ENCODE measurements at regions of chr17 and their contacts with region 1.

Region 1: DNA sequence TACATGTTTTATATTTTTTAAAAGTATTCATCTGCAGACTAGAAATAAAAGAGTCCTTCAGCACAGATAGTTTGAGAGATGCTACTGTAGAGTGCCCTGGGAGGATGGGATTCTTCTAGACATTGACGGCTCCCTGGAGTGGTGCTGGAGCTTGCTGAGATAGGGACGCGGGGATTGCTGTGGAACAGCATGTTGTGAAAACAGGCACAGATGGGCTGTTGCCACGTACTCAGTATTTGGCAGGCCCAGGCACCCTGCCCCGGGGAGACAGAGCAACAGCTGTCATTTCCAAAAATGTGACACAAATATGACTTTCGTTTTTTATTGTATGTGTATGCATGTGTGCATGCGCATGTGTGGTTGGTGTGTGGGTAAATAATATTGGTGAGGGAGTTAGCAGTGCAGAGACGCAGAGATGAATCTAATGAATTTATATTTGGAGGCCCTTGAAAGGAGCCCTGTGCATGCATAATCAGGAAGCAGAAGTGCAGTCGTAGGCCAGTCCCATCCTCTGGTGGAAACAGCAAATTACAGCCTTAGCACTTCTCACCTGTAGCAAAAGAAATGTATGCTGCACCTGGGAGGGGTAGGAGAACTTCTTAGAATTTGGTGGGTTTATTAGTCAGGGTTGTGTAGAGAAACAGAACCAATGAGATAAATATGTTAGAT is 6.2 kb upstream of the ABCA8 start:
- DNase-seq: no peak
- H3K4me3 ChIP-seq: no peak overlapping the region
- H3K27ac ChIP-seq: no peak overlapping the region
- H3K4me1 ChIP-seq: no peaks in the 10 kb centered on the region
- H3K27me3 ChIP-seq: no peaks in the 10 kb centered on the region
- CTCF ChIP-seq: no peak

Region 2: DNA sequence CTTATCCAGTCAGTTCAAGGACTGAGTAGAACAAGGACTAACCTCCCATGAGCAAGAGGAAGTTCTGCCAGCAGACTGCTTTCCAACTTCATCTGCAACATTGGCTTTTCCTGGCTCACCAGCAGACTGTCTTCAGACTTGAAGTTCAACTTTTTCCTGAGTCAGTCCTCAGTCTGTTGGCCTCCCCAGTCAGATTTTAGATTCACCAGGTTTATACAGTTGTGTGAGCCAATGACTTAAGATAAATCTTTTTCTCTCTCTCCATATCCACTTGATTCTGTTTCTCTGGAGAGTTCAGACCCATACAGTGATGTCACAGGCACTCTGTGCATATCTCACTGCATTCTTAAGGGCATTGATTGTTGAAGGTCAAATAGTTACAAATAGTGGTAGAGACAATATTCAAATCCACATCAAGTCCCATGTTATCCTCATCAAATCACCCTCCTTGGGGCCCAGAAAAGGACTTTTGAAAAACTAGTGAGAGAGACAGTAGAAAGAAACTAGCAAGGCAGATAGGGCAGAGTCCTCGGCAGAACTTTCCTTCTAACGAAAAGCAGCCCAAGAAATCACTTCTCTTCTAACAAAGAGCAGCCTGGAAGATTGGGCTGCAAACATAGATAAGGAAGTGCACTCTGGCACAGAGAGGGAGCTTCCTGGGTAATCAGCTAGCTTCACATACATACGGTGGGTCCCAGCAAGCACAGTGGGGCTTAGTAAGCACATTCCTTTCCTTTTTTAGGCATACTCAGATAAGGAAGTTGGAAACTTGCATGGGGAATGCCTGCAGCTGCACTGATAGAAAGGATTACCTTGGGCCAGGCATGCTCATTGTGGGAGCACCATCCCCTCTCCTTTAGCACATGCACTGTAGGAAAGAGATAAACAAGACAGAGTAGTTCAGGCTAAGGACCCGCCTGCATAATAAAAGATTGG is 227.8 kb before region 1 on chr17:
- CTCF ChIA-PET with region 1: no interaction called
- dilution Hi-C with region 1: no loop called
- in situ Hi-C with region 1: no loop called
- intact Hi-C with region 1: no loop called
- DNase-seq: no peak
- H3K4me3 ChIP-seq: no peak overlapping the region
- H3K27ac ChIP-seq: no peak overlapping the region
- H3K4me1 ChIP-seq: peaks cover 2% of the 10 kb centered on the region
- H3K27me3 ChIP-seq: no peaks in the 10 kb centered on the region
- CTCF ChIP-seq: no peak

Region 3: DNA sequence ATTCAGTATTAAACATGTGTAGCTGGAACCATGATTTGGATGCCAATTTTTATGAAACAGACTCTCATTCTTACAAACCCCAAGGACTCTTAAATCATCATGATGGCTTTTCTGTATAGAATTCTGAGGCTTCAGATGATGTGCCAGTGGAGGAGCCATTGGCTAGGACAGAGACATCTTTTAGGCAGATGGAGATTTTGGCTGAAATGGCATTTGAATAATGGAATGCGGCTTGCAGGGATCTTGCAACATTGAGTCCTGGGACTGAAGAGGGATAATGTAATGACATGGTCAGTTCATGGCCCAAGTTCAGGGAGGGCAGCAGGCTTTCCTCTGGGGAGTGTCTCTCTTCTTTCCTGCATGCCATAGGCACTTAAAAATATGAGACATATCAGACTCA is 178.6 kb before region 1 on chr17:
- CTCF ChIA-PET with region 1: no interaction called
- dilution Hi-C with region 1: no loop called
- in situ Hi-C with region 1: loop called (anchors 5 to 10 kb)
- intact Hi-C with region 1: no loop called
- DNase-seq: no peak
- H3K4me3 ChIP-seq: no peak overlapping the region
- H3K27ac ChIP-seq: no peak overlapping the region
- H3K4me1 ChIP-seq: no peaks in the 10 kb centered on the region
- H3K27me3 ChIP-seq: no peaks in the 10 kb centered on the region
- CTCF ChIP-seq: no peak

Region 4: DNA sequence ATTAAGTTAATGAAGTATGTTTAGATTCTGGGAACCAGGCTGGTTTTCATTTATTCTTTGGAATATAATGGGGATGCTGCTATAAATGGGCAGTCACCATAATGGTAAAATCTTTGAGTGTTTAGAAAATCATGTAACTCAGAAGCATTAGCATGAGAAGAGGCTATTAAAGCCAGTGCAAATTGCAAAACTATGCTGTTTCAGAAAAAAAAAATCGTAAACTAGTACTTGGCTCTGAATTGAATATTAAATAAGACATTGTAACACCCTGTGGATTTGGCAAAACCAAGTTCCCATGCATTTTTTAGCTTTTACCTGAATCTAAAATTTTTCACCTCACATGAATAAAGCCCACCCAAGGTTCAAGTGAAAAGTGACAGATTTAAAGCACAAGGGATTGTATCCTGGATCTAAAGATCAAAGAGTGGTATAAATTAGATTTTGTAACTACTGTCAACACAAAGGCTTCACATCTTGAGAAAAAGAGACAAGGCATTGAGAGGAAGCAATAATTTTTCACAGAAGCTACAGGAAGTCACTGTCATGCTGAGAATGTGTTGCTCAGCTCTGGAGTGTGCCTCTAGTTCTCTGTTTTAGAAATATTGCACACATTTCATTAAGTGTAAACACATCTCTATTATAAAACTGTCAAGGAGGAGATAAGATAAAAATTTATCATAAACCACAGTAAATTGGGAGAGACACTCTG is 148.3 kb before region 1 on chr17:
- CTCF ChIA-PET with region 1: no interaction called
- dilution Hi-C with region 1: no loop called
- in situ Hi-C with region 1: no loop called
- intact Hi-C with region 1: no loop called
- DNase-seq: no peak
- H3K4me3 ChIP-seq: no peak overlapping the region
- H3K27ac ChIP-seq: no peak overlapping the region
- H3K4me1 ChIP-seq: no peaks in the 10 kb centered on the region
- H3K27me3 ChIP-seq: no peaks in the 10 kb centered on the region
- CTCF ChIP-seq: no peak

Region 5: DNA sequence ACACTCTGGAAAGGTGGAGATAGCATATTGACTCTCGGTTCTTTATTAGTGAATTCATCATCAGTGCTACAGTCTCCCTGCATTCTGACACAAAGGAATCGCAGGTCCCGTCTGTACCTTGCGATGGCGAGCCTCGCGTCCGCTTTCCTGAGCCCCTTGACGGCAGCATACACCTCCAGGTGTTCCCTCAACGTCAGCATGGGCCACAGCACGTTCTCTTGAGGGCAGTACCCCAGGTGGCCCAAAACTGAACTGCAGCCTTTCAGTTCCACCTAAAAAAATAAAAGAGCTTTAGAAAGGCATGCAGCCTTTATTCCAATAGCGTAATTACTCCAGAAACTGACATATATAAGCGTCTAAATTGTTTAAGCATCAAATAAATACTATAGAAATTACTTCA is 123.6 kb after region 1 on chr17:
- CTCF ChIA-PET with region 1: no interaction called
- dilution Hi-C with region 1: no loop called
- in situ Hi-C with region 1: no loop called
- intact Hi-C with region 1: no loop called
- DNase-seq: peak; percentile 4
- H3K4me3 ChIP-seq: no peak overlapping the region
- H3K27ac ChIP-seq: no peak overlapping the region
- H3K4me1 ChIP-seq: no peaks in the 10 kb centered on the region
- H3K27me3 ChIP-seq: no peaks in the 10 kb centered on the region
- CTCF ChIP-seq: peak; percentile 30 to 40

Region 6: GRCh38 chr17:69123626-69124025 is 162.3 kb after region 1 on chr17:
- CTCF ChIA-PET with region 1: no interaction called
- dilution Hi-C with region 1: no loop called
- in situ Hi-C with region 1: no loop called
- intact Hi-C with region 1: no loop called
- DNase-seq: no peak
- H3K4me3 ChIP-seq: no peak overlapping the region
- H3K27ac ChIP-seq: no peak overlapping the region
- H3K4me1 ChIP-seq: no peaks in the 10 kb centered on the region
- H3K27me3 ChIP-seq: no peaks in the 10 kb centered on the region
- CTCF ChIP-seq: no peak